ENCODE measurements at regions of chr2 and their contacts with region 1.

Region 1: DNA sequence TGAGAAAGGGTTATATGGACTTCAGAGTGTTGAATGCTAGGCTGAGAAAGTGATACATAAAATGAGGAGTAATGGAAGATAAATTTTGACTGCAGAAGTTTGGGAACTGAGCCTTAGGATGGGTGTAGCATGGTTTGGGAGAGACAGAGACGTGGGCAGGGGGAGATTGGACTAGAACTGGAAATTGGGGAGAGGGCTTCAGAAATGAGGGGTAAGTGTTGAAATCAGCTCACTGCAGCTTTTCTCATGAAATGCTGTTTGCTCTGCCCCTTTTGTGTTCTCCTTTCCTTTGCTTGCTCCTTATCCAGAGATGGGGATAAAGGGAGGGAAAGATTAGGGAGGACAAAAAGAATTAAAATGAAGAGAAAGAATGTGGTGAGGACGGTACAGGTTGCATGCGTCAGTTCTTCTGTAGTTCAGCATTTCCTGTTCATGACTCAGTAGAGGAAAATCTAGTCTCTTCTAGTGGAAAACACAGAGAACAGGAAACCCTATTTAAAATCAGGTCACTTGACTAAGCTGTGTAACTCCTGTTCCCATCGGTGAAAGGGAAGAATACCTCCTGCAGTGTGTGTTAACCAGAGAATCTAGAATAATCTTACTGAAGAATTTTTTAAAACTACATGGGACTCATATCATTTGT is 105.6 kb downstream of the CRIM1 start:
- DNase-seq: peak; percentile 60
- ATAC-seq: peak; percentile 65
- H3K4me3 ChIP-seq: peak overlapping the region in 1 of 2 experiments; percentile 25; a peak in 2 of 4 replicates
- H3K27ac ChIP-seq: peak overlapping the region; percentile 45
- H3K4me1 ChIP-seq: peaks cover 25 to 35% of the 10 kb centered on the region in 2 experiments
- H3K27me3 ChIP-seq: no peaks in the 10 kb centered on the region
- CTCF ChIP-seq: no peak
- POLR2A ChIP-seq: no peak
- RAD21 ChIP-seq: peak; percentile 7; the same call in 1 of the 2 replicates

Region 2: GRCh38 chr2:36173760-36174404 is 287.3 kb before region 1 on chr2:
- CTCF ChIA-PET with region 1: no interaction called
- POLR2A ChIA-PET with region 1: no interaction called
- RAD21 ChIA-PET with region 1: no interaction called
- intact Hi-C with region 1: no loop called
- DNase-seq: no peak
- ATAC-seq: no peak
- H3K4me3 ChIP-seq: no peak overlapping the region
- H3K27ac ChIP-seq: no peak overlapping the region
- H3K4me1 ChIP-seq: no peaks in the 10 kb centered on the region
- H3K27me3 ChIP-seq: 0 out of 2 replicates have a peak, but pooled peaks cover 6% of the 10 kb centered on the region
- CTCF ChIP-seq: no peak
- POLR2A ChIP-seq: no peak
- RAD21 ChIP-seq: no peak

Region 3: DNA sequence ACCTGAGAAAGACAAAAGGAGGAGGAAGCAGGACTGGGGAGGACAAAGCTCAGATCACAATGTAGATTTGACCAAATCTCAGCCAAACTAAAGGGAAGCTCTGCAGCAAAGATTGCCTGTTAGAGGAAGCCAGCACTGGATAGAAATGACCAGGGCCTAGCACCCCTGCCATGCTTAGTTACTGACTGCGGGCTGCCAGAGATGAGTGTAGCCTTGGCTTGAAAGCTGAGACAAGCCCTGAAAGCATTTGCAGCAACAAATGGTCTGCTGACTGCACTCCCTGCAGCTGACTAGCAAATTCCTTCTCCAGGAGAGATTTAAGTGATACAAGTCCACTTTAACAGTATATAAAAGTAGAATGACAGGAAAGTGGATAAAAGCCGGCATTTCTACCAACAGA is 246.5 kb before region 1 on chr2:
- CTCF ChIA-PET with region 1: no interaction called
- POLR2A ChIA-PET with region 1: no interaction called
- RAD21 ChIA-PET with region 1: no interaction called
- intact Hi-C with region 1: no loop called
- DNase-seq: no peak
- ATAC-seq: no peak
- H3K4me3 ChIP-seq: no peak overlapping the region
- H3K27ac ChIP-seq: no peak overlapping the region
- H3K4me1 ChIP-seq: no peaks in the 10 kb centered on the region
- H3K27me3 ChIP-seq: no peaks in the 10 kb centered on the region
- CTCF ChIP-seq: no peak
- POLR2A ChIP-seq: no peak
- RAD21 ChIP-seq: no peak

Region 4: DNA sequence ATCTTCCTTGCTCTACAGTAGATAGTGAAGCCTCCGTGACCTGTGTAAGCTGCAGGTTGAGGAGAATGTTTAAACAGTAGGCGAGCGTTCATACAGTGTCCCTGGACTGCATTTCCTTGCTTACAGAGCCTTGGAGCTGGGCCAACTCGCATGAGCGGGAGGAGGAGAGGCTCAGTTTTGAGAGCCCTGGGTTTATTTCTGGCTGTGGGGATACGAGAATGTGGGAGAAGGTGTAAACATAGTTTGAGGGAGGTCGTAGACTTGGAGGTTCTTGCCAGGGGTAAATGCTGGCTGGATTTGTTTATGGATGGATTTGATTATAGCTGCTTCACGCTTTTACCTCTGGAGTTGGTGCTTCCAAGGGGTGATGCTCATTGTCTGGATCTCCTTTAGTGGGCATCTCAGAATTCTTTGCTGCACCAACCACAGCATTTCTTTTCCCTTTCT is 84.8 kb before region 1 on chr2:
- CTCF ChIA-PET with region 1: interaction called, 10 read pairs
- POLR2A ChIA-PET with region 1: no interaction called
- RAD21 ChIA-PET with region 1: no interaction called
- intact Hi-C with region 1: no loop called
- DNase-seq: no peak
- ATAC-seq: no peak
- H3K4me3 ChIP-seq: no peak overlapping the region
- H3K27ac ChIP-seq: no peak overlapping the region
- H3K4me1 ChIP-seq: peaks cover 58 to 84% of the 10 kb centered on the region in 2 experiments
- H3K27me3 ChIP-seq: no peaks in the 10 kb centered on the region
- CTCF ChIP-seq: no peak
- POLR2A ChIP-seq: no peak
- RAD21 ChIP-seq: no peak

Region 5: GRCh38 chr2:36708041-36708741 is 247.0 kb after region 1 on chr2:
- CTCF ChIA-PET with region 1: no interaction called
- POLR2A ChIA-PET with region 1: no interaction called
- RAD21 ChIA-PET with region 1: no interaction called
- intact Hi-C with region 1: no loop called
- DNase-seq: peak; percentile 4
- ATAC-seq: peak; percentile 34; the same call in 1 of the 2 replicates
- H3K4me3 ChIP-seq: no peak overlapping the region
- H3K27ac ChIP-seq: no peak overlapping the region
- H3K4me1 ChIP-seq: no peaks in the 10 kb centered on the region
- H3K27me3 ChIP-seq: no peaks in the 10 kb centered on the region
- CTCF ChIP-seq: peak in 2 of 3 experiments; percentile 33 to 39; a peak in 4 of 6 replicates
- POLR2A ChIP-seq: no peak
- RAD21 ChIP-seq: no peak

Measured in HCT116 (cell line).